ENCODE measurements at regions of chr7 and their contacts with region 1.

Region 1: GRCh38 chr7:140175221-140176121 is 1.3 kb downstream of the KDM7A start:
- DNase-seq: peak; percentile 93
- ATAC-seq: peak; percentile 91

Region 2: DNA sequence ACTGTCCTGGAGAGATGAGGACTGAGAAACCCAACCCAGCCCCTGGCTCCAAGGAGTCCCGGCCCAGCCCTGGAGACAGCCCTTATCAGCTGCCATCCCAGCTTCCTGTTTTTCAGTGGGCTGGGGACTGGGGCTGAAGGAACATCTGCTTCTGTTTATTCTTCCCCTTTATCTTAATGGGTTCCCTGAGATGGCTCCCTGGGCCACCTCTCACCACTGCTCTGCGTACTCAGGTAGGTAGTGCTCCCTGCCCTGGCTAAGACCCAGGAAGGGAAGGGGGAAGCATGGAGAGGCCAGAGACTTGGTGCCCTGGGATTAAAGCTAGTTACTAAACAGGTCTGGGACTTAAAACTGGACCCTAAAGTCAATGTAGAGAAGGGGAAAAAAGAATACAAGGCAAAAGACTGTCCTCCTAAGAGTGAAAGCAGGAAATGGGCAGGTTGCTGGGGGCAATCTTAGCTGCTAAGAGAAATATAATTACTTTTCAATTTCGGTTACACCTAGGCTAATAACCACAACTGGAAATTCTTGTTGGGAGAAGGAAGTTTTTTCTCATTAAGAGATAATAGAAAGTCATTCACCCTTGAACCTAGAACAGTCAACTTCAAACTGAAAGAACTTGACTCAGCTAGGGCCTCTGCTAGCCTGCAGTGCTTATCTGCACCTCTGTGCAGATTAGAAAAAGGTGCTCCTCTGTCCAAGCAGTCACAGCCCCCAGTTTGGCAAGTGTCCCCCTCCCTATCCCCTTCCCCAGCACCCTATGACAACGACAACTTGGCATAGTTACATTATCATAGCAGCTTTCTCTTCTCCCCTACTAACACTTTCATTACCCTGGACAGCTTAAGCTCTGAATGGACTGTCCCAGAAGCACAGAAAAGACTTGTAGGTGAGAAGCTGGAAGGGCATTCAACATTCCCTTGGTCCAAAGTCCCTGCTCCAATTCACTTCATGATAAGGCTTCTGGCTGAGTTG is 66.9 kb after region 1 on chr7:
- intact Hi-C with region 1: no loop called
- DNase-seq: no peak
- ATAC-seq: peak; percentile 74

Region 3: GRCh38 chr7:140326116-140326928 is 150.9 kb after region 1 on chr7:
- intact Hi-C with region 1: loop called (anchors 5 kb)
- DNase-seq: peak; percentile 84
- ATAC-seq: peak; percentile 91